HEK293 (cell line): ENCODE measurements at regions of chr5 and their contacts with region 1.

Region 1: DNA sequence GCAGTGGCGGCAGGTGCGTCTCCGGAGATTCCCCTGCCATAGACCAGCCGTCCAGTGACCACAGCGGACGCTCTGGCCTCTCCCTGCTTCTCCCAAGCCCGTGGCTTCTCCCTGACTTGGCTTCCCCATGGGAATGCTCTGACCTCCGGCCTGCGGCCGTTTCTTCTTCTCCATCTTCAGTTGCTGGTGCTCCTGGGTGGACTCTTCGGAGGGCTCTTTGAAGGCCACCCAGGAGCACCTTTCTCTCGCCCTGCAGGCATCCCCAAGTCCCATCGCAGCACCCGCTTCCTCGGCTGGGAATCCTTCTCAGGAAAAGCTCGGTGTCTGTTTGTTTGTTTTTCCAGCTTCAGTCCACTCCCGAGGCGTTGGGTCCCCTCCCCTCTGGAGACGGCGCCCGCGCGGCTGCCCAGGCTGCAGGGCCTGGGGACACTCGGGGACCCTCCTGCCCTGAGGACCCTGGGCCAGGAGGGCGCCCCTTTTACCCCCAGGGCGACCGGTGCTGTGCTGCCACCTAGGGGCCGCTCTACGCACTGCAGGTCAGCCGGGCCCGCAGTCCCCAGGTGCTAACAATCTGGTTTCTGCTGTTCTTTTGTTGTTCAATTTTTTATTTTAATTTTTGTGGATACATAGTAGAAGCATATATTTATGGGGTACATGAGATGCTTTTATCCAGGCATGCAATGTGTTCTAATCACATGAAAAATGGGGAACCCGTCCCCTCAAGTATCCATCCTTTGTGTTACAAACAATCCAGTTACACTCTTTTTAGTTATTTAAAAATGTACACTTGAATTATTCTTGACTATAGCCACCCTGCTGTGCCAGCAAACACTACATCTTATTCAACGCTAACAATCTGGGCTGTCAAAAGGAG is 197.9 kb upstream of the ADAMTS16 start:
- H3K4me3 ChIP-seq: no peak overlapping the region
- H3K27ac ChIP-seq: no peak overlapping the region
- H3K4me1 ChIP-seq: no peaks in the 10 kb centered on the region
- CTCF ChIP-seq: peak; percentile 75

Region 2: GRCh38 chr5:4929092-4929655 is 13.0 kb before region 1 on chr5:
- CTCF ChIA-PET with region 1: interaction called, 31 read pairs
- POLR2A ChIA-PET with region 1: no interaction called
- H3K4me3 ChIP-seq: no peak overlapping the region
- H3K27ac ChIP-seq: no peak overlapping the region
- H3K4me1 ChIP-seq: no peaks in the 10 kb centered on the region
- CTCF ChIP-seq: no peak

Region 3: GRCh38 chr5:4954048-4954447 is 11.9 kb after region 1 on chr5:
- CTCF ChIA-PET with region 1: interaction called, 27 read pairs
- POLR2A ChIA-PET with region 1: no interaction called
- H3K4me3 ChIP-seq: no peak overlapping the region
- H3K27ac ChIP-seq: no peak overlapping the region
- H3K4me1 ChIP-seq: no peaks in the 10 kb centered on the region
- CTCF ChIP-seq: no peak

Region 4: DNA sequence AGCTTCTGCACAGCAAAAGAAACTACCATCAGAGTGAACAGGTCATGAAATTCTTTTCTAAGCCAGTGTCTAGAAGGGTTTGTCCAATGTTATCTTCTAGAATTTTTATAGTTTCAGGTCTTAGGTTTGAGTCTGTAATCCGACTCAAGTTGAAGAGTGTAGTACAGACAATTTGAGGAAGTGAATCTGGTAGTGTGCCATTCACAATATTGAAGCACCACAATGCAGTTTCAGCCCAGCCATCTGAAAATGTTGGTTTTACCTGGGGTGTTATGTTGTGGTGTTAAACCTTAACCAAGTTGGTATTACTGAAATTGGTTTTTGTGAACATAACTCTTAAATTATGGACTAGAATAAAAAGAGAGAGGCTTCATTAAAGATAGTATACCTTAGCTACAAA is 275.2 kb after region 1 on chr5:
- CTCF ChIA-PET with region 1: no interaction called
- POLR2A ChIA-PET with region 1: no interaction called
- H3K4me3 ChIP-seq: no peak overlapping the region
- H3K27ac ChIP-seq: no peak overlapping the region
- H3K4me1 ChIP-seq: 0 out of 2 replicates have a peak, but pooled peaks cover 3% of the 10 kb centered on the region
- CTCF ChIP-seq: no peak